Naive thymus-derived CD4-positive, alpha-beta T cell (primary cell): ENCODE measurements at regions of chr3 and their contacts with region 1.

Region 1: DNA sequence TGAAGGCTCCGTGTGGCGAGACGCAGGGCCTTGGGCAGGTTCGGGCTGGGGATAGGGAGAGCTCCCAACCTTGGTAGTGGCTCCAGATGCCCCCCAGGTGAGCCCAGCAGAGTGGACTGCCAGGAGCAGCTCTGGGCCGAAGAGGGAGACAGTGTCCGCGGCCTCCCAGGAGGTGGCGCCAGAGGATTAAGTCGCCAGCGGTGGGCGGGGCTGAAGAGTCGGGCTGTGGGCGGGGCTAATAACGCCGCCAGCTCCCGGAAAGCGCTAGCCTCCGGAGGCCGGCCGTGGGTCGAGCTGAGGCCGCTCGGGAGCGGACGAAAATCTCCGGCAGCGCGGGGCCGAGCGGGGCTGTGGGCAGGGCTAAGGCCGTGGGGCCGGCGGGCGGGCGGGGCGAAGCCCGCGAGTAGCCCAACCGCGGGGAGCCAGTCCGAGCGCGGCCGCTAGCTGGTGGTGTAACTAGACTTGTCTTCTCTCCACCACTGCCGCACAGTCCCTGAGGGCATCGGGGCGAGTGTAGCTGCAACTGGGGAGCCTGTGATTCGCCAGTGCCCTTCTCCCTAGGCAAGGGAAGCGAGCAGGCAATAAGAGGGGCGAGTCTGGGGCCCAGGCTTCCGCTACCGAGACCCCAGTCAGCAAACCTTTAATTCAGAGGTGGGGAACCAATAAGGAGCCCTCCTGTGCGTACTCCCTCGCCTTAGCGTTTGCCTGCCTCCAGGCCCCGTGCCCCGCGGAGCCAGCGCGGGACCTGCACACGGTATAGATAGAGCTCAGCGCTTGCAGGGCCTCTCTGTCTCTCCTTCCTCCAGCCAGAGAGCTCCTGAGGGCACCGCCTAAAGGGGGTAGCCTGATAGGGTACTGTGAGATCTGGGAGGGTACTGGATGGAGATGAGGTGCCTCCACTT is 14.4 kb upstream of the BSN start:
- DNase-seq: peak; percentile 77 to 97 (median 85)
- ATAC-seq: peak; percentile 99
- H3K4me3 ChIP-seq: peak overlapping the region; percentile 90
- H3K4me3 Mint-ChIP-seq: peak overlapping the region; percentile 75 to 84 (median 80)
- H3K27ac ChIP-seq: peak overlapping the region; percentile 78
- H3K27ac Mint-ChIP-seq: peak overlapping the region in 6 of 9 donors; percentile 14 to 69 (median 33)
- H3K4me1 ChIP-seq: peaks cover 4 to 5% of the 10 kb centered on the region in 2 donors
- H3K4me1 Mint-ChIP-seq: peaks cover 0 to 9% (median 5%) of the 10 kb centered on the region in 7 donors
- H3K27me3 ChIP-seq: no peaks in the 10 kb centered on the region
- H3K27me3 Mint-ChIP-seq: peaks cover 0 to 24% (median 4%) of the 10 kb centered on the region in 5 donors

Region 2: DNA sequence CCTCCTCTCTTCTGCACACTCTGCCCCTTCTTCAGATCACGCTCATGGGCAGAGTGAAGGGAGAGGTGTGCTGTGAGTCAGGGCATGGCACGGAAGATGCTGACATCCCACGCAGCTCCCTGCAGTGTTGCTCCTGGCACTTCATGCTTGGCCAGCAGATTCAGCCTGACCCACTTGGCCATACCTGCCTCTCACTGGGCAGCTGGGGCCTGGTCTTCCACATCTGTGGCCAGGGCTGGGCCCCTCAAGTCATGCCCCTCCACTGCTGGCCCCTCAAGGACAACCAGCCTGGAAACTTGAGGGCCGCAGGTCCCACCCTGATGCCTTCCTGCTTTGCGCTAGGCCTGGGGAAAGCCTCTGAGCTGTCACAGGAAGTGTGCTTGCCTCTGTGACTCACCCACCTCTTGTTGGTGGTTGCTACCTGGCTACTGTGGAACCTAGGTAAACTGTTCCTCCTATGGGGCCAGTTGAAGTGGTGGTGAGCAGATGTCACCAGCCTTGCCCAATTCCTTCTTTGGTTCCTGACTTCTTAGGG is 63.0 kb after region 1 on chr3:
- CTCF ChIA-PET with region 1: no interaction called
- POLR2A ChIA-PET with region 1: no interaction called
- intact Hi-C with region 1: loop called in 1 of 2 experiments (anchors 1 kb)
- DNase-seq: peak in 7 of 9 donors; percentile 20 to 41 (median 31)
- ATAC-seq: peak; percentile 87
- H3K4me3 ChIP-seq: no peak overlapping the region
- H3K4me3 Mint-ChIP-seq: peak overlapping the region in 2 of 10 donors; percentile 18 to 49
- H3K27ac ChIP-seq: peak overlapping the region; percentile 22
- H3K27ac Mint-ChIP-seq: peak overlapping the region; percentile 40 to 87 (median 79)
- H3K4me1 ChIP-seq: peaks cover 11 to 12% of the 10 kb centered on the region in 2 donors
- H3K4me1 Mint-ChIP-seq: peaks cover 12 to 19% (median 19%) of the 10 kb centered on the region in 7 donors
- H3K27me3 ChIP-seq: no peaks in the 10 kb centered on the region
- H3K27me3 Mint-ChIP-seq: no peaks in the 10 kb centered on the region

Region 3: DNA sequence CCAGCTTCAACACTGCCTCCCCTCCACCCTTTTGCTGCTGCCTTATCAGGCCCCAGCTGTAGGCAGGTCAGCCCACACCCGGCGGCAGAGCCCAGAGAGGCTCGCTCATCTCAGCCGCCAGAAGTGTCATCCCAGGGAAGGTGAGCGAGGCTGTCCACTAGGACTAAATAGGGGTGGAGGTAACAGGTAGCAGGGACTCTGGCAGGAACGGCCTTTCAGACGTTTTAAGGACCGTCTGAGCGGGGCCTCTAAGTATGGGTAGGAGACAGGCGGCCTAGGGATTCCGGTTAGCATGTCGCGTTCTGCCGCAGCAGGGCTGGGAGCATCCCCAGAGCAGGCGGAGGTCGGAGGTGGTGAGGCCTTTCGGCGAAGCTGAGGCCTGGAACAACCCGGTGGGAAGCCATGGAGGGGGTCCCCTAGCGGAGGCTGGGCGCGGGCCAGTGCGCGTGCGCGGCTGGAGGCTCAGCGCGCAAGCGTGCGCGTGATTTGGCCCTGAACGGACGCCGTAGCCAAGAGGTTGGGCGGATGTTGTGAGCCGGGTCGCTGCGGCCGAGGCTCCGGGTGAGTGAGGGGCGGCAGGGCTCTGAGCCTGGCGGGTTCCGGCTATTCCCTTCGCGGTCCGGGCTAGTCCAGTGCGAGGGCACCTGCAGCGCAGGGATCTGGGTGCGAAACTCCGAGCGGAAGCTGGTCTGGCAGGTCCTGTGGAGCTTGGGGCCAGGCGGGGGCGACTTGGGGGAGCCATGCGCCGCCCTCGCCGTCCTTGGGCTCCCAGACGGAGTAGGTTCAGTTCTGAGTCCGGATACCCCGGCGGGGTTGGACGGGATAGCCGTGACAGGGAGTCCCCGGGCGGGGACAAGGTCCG is 149.4 kb after region 1 on chr3 and contains the starts of genes MST1 and RNF123:
- CTCF ChIA-PET with region 1: interaction called, 3 read pairs
- POLR2A ChIA-PET with region 1: no interaction called
- intact Hi-C with region 1: loop called in 1 of 2 experiments (anchors 1 kb)
- DNase-seq: peak; percentile 89 to 96 (median 93)
- ATAC-seq: peak; percentile 91
- H3K4me3 ChIP-seq: peak within 1 kb of the TSS; percentile 97
- H3K4me3 Mint-ChIP-seq: peak within 1 kb of the TSS; percentile 84 to 99 (median 96)
- H3K27ac ChIP-seq: peak within 1 kb of the TSS; percentile 82
- H3K27ac Mint-ChIP-seq: peak within 1 kb of the TSS; percentile 87 to 99 (median 95)
- H3K4me1 ChIP-seq: peaks cover 6 to 13% of the 10 kb centered on the region in 2 donors
- H3K4me1 Mint-ChIP-seq: peaks cover 20 to 54% (median 41%) of the 10 kb centered on the region in 7 donors
- H3K27me3 ChIP-seq: no peaks in the 10 kb centered on the region
- H3K27me3 Mint-ChIP-seq: peaks cover 0 to 5% (median 0%) of the 10 kb centered on the region in 5 donors
- total RNA-seq, gene MST1: 7.9 to 12.8 (median 10.0) TPM
- total RNA-seq, gene RNF123: 34.5 to 77.2 (median 50.7) TPM

Region 4: GRCh38 chr3:49839193-49839809 is 299.4 kb after region 1 on chr3:
- CTCF ChIA-PET with region 1: interaction called, 21 read pairs
- POLR2A ChIA-PET with region 1: interaction called, 5 read pairs
- intact Hi-C with region 1: loop called in 1 of 2 experiments (anchors 2 kb)
- DNase-seq: peak; percentile 64 to 84 (median 75)
- ATAC-seq: peak; percentile 97
- H3K4me3 ChIP-seq: no peak overlapping the region
- H3K4me3 Mint-ChIP-seq: no peak overlapping the region
- H3K27ac ChIP-seq: no peak overlapping the region
- H3K27ac Mint-ChIP-seq: peak overlapping the region in 1 of 9 donors; percentile 3
- H3K4me1 ChIP-seq: no peaks in the 10 kb centered on the region
- H3K4me1 Mint-ChIP-seq: peaks cover 0 to 9% (median 0%) of the 10 kb centered on the region in 7 donors
- H3K27me3 ChIP-seq: no peaks in the 10 kb centered on the region
- H3K27me3 Mint-ChIP-seq: no peaks in the 10 kb centered on the region